Mammary epithelial cell (primary cell): ENCODE measurements at regions of chr17 and their contacts with region 1.

Region 1: GRCh38 chr17:13086142-13086769 is 68.4 kb upstream of the ELAC2 start:
- DNase-seq: no peak
- H3K4me3 ChIP-seq: no peak overlapping the region
- H3K27ac ChIP-seq: no peak overlapping the region
- H3K4me1 ChIP-seq: no peaks in the 10 kb centered on the region
- H3K27me3 ChIP-seq: peaks cover 2% of the 10 kb centered on the region
- CTCF ChIP-seq: no peak

Region 2: GRCh38 chr17:13182462-13183253 is 96.4 kb after region 1 on chr17:
- CTCF ChIA-PET with region 1: no interaction called
- dilution Hi-C with region 1: no loop called
- in situ Hi-C with region 1: loop called in 1 of 2 experiments (anchors 25 kb)
- intact Hi-C with region 1: no loop called
- DNase-seq: no peak
- H3K4me3 ChIP-seq: no peak overlapping the region
- H3K27ac ChIP-seq: no peak overlapping the region
- H3K4me1 ChIP-seq: no peaks in the 10 kb centered on the region
- H3K27me3 ChIP-seq: no peaks in the 10 kb centered on the region
- CTCF ChIP-seq: no peak